GM18951 (cell line): ENCODE measurements at regions of chr14 and their contacts with region 1.

Region 1: DNA sequence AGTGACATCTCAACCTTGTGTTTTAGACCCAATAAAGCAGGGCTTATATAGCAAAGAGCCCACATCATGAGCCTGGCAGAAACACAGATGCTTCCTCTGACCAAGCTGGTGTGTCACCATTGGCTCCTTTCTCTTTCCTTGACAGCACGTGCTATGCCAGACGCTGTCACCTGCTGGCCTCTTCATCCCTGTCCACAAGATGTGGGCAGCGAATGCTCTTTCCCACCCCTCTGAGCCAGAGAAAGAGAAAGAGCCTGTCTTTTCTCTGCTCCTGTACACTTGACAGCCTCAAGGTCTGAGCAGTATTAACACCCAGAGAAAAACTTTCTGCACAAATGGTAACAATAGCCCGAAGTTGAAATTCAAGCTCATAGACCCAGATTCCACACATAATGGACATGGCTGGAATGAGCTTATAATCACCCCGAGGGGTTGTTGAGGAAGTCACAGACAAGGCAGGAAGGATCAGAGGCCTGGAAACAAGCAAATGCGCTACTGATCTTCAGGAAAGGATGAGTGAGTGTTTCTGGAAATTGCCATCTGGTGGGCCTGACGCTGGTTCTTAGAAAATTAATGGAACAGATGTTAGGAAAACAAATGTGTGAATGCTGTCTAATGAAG is 8.9 kb downstream of the TGFB3 start:
- POLR2A ChIP-seq: no peak

Region 2: GRCh38 chr14:75794615-75795038 is 178.3 kb before region 1 on chr14:
- in situ Hi-C with region 1: no loop called
- POLR2A ChIP-seq: no peak

Region 3: GRCh38 chr14:75822522-75823141 is 150.3 kb before region 1 on chr14:
- in situ Hi-C with region 1: no loop called
- POLR2A ChIP-seq: no peak

Region 4: DNA sequence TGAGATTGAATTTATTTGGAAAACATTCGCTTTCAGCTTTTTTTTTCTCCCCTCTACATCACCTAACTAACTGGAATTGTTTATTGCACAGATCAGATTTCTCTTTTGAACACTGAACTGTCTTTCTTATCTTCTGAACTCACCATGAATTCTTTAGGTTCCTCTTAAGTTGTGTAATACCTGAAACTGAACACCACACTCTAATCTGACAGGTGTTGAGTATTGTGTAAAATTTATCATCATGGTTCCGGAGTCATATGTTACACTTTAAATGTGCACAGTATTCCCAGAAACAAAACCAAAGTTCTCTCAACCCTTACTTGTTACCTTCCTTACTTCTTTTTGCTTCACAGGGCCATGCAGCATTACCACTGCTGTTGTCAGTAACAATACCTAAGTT is 57.9 kb before region 1 on chr14:
- in situ Hi-C with region 1: loop called (anchors 5 kb)
- POLR2A ChIP-seq: no peak